AG04449 (cell line): ENCODE measurements at regions of chr4 and their contacts with region 1.

Region 1: DNA sequence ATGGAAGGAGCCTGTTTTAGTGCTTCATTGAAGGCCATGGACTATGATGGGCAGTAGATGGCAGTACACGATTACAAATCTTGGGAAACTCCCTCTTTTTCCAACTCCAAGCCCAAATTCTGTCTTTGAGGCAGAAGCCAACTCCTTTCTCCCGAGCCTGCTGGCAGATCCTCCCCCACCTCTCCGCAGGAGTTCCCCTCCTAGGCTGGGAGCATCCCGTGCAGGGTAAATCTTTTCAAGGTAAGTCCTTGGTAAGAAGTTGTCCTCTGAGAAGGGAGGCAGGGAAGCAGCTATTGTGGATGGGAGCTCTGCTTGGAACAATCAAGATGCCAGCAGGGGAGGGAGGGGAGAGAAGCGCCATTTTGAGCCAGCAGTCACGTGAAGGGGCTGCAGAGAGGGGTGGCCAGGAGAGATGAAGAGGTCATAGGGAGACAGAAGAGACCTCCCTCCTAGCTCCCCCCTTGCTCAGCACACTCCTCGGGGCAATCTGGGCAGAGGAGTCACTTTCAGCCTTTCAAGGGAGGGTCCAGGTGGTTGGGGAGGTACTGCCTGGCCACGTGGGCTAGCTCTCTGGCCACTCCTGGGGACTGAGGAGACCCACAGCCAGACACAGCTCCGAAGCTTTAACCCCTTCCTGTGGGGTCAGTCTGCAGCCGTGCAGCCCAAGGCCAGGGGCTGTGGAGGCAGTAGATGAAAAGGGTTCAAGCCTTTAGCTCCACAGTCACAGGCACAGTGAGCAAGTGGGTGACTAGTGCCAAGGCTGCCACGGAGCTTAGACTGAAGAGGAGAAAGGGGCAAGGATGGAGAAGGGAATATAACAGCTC is 9.6 kb downstream of the CC2D2A start:
- DNase-seq: peak; percentile 42
- H3K4me3 ChIP-seq: peak overlapping the region; percentile 68
- CTCF ChIP-seq: peak; percentile 67

Region 2: GRCh38 chr4:15231265-15232091 is 247.8 kb before region 1 on chr4:
- CTCF ChIA-PET with region 1: interaction called, 10 read pairs
- POLR2A ChIA-PET with region 1: no interaction called
- DNase-seq: no peak
- H3K4me3 ChIP-seq: no peak overlapping the region
- CTCF ChIP-seq: peak; percentile 69

Region 3: DNA sequence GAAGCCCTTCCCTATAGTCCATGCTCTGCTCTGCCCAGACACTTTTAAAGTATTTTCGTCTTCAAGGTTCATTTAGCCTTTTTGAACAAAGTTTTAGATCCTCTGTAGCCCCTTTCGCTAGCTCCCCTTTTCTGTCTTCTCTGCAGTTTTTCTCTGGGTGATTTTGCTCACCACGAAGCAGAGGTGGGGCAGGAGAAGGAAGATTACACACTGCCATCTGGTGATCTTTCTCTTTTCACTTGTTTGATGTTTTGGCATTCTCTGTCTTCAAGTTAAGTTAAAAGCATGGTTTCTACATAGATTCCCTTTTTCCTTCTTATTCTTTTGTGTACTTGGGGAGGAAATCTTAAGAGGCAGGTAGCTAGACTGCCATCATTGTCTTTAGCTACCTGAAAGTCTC is 34.2 kb after region 1 on chr4:
- CTCF ChIA-PET with region 1: interaction called, 15 read pairs
- POLR2A ChIA-PET with region 1: interaction called, 3 read pairs
- DNase-seq: no peak
- H3K4me3 ChIP-seq: no peak overlapping the region
- CTCF ChIP-seq: no peak

Region 4: GRCh38 chr4:15649914-15650545 is 170.7 kb after region 1 on chr4:
- CTCF ChIA-PET with region 1: interaction called, 13 read pairs
- POLR2A ChIA-PET with region 1: interaction called, 3 read pairs
- DNase-seq: no peak
- H3K4me3 ChIP-seq: no peak overlapping the region
- CTCF ChIP-seq: peak; percentile 40